Calu3 (cell line): ENCODE measurements at regions of chr12 and their contacts with region 1.

Region 1: GRCh38 chr12:57088459-57089248 is at the start of gene NAB2:
- DNase-seq: peak; percentile 97
- H3K4me3 Mint-ChIP-seq: peak within 1 kb of the TSS; percentile 91
- H3K27ac Mint-ChIP-seq: peak within 1 kb of the TSS; percentile 94
- H3K4me1 Mint-ChIP-seq: peaks cover 61% of the 10 kb centered on the region
- H3K27me3 Mint-ChIP-seq: no peaks in the 10 kb centered on the region
- CTCF ChIP-seq: no peak
- total RNA-seq, gene NAB2: 21.3 and 25.6 TPM in 2 replicates

Region 2: DNA sequence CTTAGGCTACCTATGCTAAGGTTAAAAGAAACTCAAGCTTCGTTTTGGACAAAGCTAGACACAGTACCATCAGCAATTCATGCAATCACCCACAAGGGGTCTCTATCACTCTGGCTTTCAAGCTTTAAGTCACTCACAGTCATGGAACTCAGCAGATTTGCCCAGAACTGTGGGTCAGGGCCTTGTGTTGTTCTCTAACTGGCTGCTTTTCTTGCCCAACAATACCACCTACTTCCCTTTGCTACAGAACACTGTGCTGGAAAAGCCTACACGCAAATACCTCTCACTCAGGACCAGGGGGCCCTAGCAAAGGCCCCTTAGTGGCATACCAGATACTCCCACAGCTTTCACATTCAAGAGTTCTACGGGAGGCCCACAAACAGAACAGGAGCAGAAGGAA is 19.1 kb before region 1 on chr12:
- CTCF ChIA-PET with region 1: interaction called, 21 read pairs
- intact Hi-C with region 1: loop called (anchors 1 kb)
- DNase-seq: peak; percentile 68
- H3K4me3 Mint-ChIP-seq: no peak overlapping the region
- H3K27ac Mint-ChIP-seq: no peak overlapping the region
- H3K4me1 Mint-ChIP-seq: no peaks in the 10 kb centered on the region
- H3K27me3 Mint-ChIP-seq: no peaks in the 10 kb centered on the region
- CTCF ChIP-seq: peak; percentile 64

Region 3: DNA sequence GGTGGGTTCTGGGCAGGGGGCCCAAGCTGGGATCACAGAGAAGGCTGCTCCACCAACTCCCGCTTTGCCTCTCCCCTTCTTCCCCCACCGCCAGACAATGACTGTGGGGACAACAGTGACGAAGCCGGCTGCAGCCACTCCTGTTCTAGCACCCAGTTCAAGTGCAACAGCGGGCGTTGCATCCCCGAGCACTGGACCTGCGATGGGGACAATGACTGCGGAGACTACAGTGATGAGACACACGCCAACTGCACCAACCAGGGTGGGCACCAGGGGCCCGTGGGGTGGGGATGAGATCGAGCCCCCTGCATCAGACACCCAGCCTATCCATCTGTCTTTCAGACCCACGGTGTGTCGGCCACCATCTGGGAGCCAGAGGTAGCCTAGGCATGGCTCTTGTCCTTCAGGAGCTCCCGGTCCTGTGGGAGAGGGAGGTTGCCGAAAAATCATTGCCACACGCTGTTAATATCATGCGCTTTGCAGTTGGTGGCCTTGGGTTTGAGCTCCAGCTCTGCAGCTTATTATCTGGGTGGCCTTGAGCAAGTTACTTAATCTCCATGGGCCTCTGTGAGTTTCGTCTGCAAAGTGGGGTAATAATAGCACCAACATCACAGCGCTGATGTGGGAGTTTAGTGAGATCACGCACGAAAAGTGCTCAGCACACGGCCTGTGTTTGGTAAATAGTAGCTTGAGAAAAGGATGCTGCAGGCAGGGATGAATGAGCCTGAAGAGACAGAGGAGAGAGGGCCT is 80.6 kb after region 1 on chr12:
- CTCF ChIA-PET with region 1: no interaction called
- intact Hi-C with region 1: no loop called
- DNase-seq: no peak
- H3K4me3 Mint-ChIP-seq: no peak overlapping the region
- H3K27ac Mint-ChIP-seq: no peak overlapping the region
- H3K4me1 Mint-ChIP-seq: peaks cover 23% of the 10 kb centered on the region
- H3K27me3 Mint-ChIP-seq: peaks cover 14% of the 10 kb centered on the region
- CTCF ChIP-seq: no peak